ENCODE measurements at regions of chr3 and their contacts with region 1.

Region 1: GRCh38 chr3:187319699-187320302 is 28.3 kb upstream of the MASP1 start:
- DNase-seq: peak; percentile 56
- CTCF ChIP-seq: peak; percentile 80

Region 2: DNA sequence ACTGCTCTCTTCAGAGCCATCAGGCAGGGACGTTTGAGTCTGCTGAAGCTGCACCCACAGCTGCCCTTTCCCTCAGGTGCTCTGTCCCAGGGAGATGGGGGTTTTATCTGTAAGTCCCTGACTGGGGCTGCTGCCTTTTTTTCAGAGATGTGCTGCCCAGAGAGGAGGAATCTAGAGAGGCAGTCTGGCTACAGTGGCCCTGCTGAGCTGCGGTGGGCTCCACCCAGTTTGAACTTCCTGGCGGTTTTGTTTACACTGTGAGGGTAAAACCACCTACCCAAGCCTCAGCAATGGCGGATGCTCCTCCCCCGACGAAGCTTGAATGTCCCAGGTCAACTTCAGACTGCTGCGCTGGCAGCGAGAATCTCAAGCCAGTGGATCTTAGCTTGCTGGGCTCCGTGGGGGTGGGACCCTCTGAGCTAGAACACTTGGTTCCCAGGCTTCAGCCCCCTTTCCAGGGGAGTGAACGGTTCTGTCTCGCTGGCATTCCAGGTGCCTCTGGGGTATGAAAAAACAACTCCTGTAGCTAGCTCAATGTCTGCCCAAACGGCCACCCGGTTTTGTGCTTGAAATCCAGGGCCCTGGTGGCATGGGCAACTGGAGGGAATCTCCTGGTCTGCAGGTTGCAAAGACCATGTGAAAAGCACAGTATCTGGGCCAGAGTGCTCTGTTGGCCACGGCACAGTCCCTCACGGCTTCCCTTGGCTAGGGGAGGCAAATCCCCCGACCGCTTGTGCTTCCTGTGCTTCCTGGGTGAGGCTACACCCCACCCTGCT is 410.5 kb before region 1 on chr3:
- CTCF ChIA-PET with region 1: no interaction called
- POLR2A ChIA-PET with region 1: no interaction called
- DNase-seq: no peak
- CTCF ChIP-seq: no peak

Region 3: GRCh38 chr3:187223799-187224198 is 96.0 kb before region 1 on chr3:
- CTCF ChIA-PET with region 1: interaction called, 24 read pairs
- POLR2A ChIA-PET with region 1: no interaction called
- DNase-seq: no peak
- CTCF ChIP-seq: no peak

Region 4: GRCh38 chr3:187305881-187306280 is 13.9 kb before region 1 on chr3:
- CTCF ChIA-PET with region 1: interaction called, 56 read pairs
- POLR2A ChIA-PET with region 1: no interaction called
- DNase-seq: no peak
- CTCF ChIP-seq: no peak

Region 5: DNA sequence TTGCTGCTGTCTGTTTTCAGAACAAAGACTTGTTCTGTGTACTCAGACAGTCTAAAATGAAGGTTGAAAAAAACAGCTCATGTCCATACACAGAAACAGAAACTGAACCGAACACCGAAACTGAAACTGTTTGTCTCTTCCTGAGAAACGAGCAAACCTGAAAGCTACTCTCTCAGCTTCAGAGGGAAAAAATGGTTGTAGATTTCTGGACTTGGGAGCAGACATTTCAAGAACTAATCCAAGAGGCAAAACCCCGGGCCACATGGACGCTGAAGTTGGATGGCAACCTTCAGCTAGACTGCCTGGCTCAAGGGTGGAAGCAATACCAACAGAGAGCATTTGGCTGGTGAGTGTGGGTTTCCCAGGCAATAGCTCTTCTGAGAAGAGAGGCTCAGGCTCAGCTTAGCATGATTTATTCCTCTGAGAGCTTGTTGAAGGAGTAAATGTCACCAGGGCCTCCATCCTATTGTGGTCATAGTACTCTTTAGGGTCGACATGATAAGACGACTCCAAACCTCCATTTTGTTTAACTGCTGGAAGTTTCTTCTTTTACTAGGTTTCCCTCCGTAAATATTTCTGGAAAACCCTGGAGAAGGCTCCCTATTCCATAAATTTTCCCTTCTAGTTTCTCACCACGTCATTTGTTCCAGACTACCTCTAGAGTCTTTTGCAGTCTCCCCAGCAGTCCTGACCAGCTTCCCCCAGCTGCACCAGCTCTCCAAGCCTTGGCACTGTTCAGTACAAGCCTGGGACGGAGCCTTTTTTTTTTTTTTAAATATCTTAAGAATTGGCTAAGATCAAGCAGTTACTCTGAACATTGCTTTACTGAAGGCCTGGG is 48.7 kb after region 1 on chr3 and contains the start of gene RTP4:
- CTCF ChIA-PET with region 1: interaction called, 13 read pairs
- POLR2A ChIA-PET with region 1: no interaction called
- DNase-seq: peak; percentile 66
- CTCF ChIP-seq: no peak

Region 6: GRCh38 chr3:187648177-187648576 is 328.4 kb after region 1 on chr3:
- CTCF ChIA-PET with region 1: interaction called, 16 read pairs
- POLR2A ChIA-PET with region 1: no interaction called
- DNase-seq: peak; percentile 8
- CTCF ChIP-seq: no peak

Region 7: GRCh38 chr3:187694801-187695200 is 375.0 kb after region 1 on chr3:
- CTCF ChIA-PET with region 1: interaction called, 18 read pairs
- POLR2A ChIA-PET with region 1: no interaction called
- DNase-seq: no peak
- CTCF ChIP-seq: no peak

Region 8: GRCh38 chr3:187714404-187714979 is 394.7 kb after region 1 on chr3:
- CTCF ChIA-PET with region 1: interaction called, 127 read pairs
- POLR2A ChIA-PET with region 1: no interaction called
- DNase-seq: peak; percentile 66
- CTCF ChIP-seq: peak; percentile 82